ENCODE measurements at regions of chr2 and their contacts with region 1.

Region 1: DNA sequence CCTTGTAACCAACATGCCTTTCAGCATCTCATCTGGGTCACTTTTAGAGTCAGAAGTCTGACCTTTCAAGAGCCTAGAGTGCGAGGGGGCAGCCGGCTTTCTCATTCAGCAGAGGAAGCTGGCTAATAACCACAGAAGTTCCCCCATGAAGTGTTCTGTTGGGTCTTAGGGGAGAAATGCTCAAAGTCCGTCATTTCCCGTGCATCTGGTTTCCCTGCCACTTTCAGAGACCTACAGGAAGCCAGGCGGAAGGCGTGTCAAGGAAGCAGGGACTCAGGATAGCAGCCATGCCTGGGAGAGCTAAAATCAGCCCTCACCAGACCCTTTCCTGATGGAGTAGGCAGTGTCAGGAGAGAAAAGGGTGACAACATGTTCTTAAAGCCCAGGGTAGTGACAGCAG is 301.8 kb upstream of the ID2 start:
- DNase-seq: no peak
- H3K4me3 ChIP-seq: no peak overlapping the region
- H3K27ac ChIP-seq: peak overlapping the region; percentile 32
- H3K4me1 ChIP-seq: peaks cover 23% of the 10 kb centered on the region
- H3K27me3 ChIP-seq: no peaks in the 10 kb centered on the region
- CTCF ChIP-seq: no peak

Region 2: GRCh38 chr2:7118606-7119503 is 1261.2 kb before region 1 on chr2:
- CTCF ChIA-PET with region 1: no interaction called
- POLR2A ChIA-PET with region 1: no interaction called
- intact Hi-C with region 1: loop called (anchors 10 kb)
- DNase-seq: peak; percentile 83
- H3K4me3 ChIP-seq: no peak overlapping the region
- H3K27ac ChIP-seq: peak overlapping the region; percentile 72
- H3K4me1 ChIP-seq: peaks cover 19% of the 10 kb centered on the region
- H3K27me3 ChIP-seq: no peaks in the 10 kb centered on the region
- CTCF ChIP-seq: peak; percentile 84

Region 3: DNA sequence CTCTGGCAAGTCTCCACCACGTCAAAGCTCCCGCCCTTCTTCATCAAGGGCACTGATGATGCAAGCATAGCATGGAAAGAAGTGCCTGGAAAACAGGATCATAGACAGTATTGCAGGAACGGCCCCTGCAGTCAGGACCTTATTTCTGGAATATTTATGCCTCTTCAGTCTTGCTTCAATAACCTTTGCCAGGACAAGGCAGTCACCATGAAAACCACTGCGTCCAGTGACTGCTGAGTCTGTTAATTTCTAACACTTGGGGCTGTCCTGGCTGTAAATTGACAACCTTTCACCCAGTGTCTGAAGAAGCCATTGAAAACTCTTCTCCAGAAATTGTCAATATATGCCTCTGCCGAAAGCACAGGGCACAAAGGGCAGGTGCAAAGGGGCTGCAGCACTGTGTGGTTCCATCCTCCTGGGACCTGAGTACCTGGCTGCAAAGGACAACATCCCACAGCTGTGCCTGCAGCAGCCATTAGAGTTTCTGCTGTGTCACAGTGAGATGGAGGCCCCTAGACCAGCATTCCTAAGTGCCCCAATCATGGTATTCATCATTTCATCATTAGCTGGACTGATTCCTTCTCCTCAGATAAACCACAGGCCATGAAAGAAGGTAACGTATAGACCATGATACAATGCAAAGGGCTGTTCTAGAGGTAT is 643.2 kb before region 1 on chr2:
- CTCF ChIA-PET with region 1: no interaction called
- POLR2A ChIA-PET with region 1: no interaction called
- intact Hi-C with region 1: loop called (anchors 10 kb)
- DNase-seq: no peak
- H3K4me3 ChIP-seq: no peak overlapping the region
- H3K27ac ChIP-seq: no peak overlapping the region
- H3K4me1 ChIP-seq: no peaks in the 10 kb centered on the region
- H3K27me3 ChIP-seq: no peaks in the 10 kb centered on the region
- CTCF ChIP-seq: no peak

Region 4: GRCh38 chr2:8171608-8172007 is 208.4 kb before region 1 on chr2:
- CTCF ChIA-PET with region 1: no interaction called
- POLR2A ChIA-PET with region 1: no interaction called
- intact Hi-C with region 1: loop called (anchors 10 kb)
- DNase-seq: peak; percentile 22
- H3K4me3 ChIP-seq: no peak overlapping the region
- H3K27ac ChIP-seq: peak overlapping the region; percentile 73
- H3K4me1 ChIP-seq: peaks cover 46% of the 10 kb centered on the region
- H3K27me3 ChIP-seq: no peaks in the 10 kb centered on the region
- CTCF ChIP-seq: no peak